ENCODE measurements at regions of chr6 and their contacts with region 1.

Region 1: GRCh38 chr6:29847871-29848630 is 20.4 kb downstream of the HLA-G start:
- DNase-seq: peak; percentile 87
- H3K4me3 ChIP-seq: no peak overlapping the region
- H3K27ac ChIP-seq: no peak overlapping the region
- H3K4me1 ChIP-seq: peaks cover 0 to 8% (median 0%) of the 10 kb centered on the region in 4 donors
- H3K27me3 ChIP-seq: peaks cover 63% of the 10 kb centered on the region
- CTCF ChIP-seq: peak; percentile 88 to 95 (median 94)
- EP300 ChIP-seq: no peak
- POLR2A ChIP-seq: no peak

Region 2: GRCh38 chr6:29656157-29656556 is 191.9 kb before region 1 on chr6:
- in situ Hi-C with region 1: no loop called
- intact Hi-C with region 1: no loop called
- DNase-seq: no peak
- H3K4me3 ChIP-seq: no peak overlapping the region
- H3K27ac ChIP-seq: no peak overlapping the region
- H3K4me1 ChIP-seq: peaks cover 0 to 5% (median 0%) of the 10 kb centered on the region in 4 donors
- H3K27me3 ChIP-seq: peaks cover 11% of the 10 kb centered on the region
- CTCF ChIP-seq: no peak
- EP300 ChIP-seq: no peak
- POLR2A ChIP-seq: no peak

Region 3: GRCh38 chr6:29723262-29723665 is 124.8 kb before region 1 on chr6 and contains the start of gene HLA-F:
- in situ Hi-C with region 1: loop called in 3 of 4 experiments (anchors 25 kb)
- intact Hi-C with region 1: no loop called
- DNase-seq: peak; percentile 93
- H3K4me3 ChIP-seq: peak within 1 kb of the TSS; percentile 83 to 98 (median 91)
- H3K27ac ChIP-seq: peak within 1 kb of the TSS; percentile 87 to 92 (median 90)
- H3K4me1 ChIP-seq: peaks cover 4 to 23% (median 11%) of the 10 kb centered on the region in 4 donors
- H3K27me3 ChIP-seq: no peaks in the 10 kb centered on the region
- CTCF ChIP-seq: peak in 1 of 5 experiments; percentile 3
- EP300 ChIP-seq: no peak
- POLR2A ChIP-seq: peak; percentile 87
- total RNA-seq, gene HLA-F: 90.4 to 500 (median 306) TPM

Region 4: GRCh38 chr6:29752451-29753308 is 95.4 kb before region 1 on chr6:
- in situ Hi-C with region 1: loop called in 2 of 4 experiments (anchors 25 kb)
- intact Hi-C with region 1: no loop called
- DNase-seq: peak; percentile 91
- H3K4me3 ChIP-seq: peak overlapping the region; percentile 64 to 81 (median 66)
- H3K27ac ChIP-seq: peak overlapping the region; percentile 88 to 95 (median 93)
- H3K4me1 ChIP-seq: peaks cover 4 to 29% (median 25%) of the 10 kb centered on the region in 4 donors
- H3K27me3 ChIP-seq: peaks cover 5% of the 10 kb centered on the region
- CTCF ChIP-seq: peak; percentile 87 to 97 (median 91)
- EP300 ChIP-seq: no peak
- POLR2A ChIP-seq: peak; percentile 28

Region 5: DNA sequence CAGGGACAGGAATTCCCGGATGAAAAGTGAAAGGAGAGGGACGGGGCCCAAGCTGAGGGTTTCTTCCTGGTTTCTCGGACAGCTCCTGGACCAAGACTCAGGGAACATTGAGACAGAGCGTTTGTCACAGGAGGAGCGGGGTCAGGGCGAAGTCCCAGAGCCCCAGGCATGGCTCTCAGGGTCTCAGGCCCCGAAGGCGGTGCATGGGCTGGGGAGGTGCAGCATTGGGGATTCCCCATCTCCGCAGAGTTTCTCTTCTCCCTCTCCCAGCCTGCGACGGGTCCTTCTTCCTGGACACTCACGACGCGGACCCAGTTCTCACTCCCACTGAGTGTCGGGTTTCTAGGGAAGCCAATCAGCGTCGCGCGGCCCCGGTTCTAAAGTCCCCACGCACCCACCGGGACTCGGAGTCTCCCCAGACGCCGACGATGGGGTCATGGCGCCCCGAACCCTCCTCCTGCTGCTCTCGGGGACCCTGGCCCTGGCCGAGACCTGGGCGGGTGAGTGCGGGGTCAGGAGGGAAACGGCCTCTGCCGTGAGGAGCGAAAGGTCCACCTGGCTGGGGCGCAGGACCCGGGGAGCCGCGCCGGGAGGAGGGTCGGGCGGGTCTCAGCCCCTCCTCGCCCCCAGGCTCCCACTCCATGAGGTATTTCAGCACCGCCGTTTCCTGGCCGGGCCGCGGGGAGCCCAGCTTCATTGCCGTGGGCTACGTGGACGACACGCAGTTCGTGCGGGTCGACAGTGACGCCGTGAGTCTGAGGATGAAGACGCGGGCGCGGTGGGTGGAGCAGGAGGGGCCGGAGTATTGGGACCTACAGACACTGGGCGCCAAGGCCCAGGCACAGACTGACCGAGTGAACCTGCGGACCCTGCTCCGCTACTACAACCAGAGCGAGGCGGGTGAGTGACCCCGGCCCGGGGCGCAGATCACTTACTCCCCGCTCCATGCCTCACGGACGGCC is 158.4 kb after region 1 on chr6:
- in situ Hi-C with region 1: loop called (anchors 5 to 25 kb)
- intact Hi-C with region 1: loop called (anchors 5 kb)
- DNase-seq: peak; percentile 20
- H3K4me3 ChIP-seq: peak overlapping the region; percentile 30 to 63 (median 48)
- H3K27ac ChIP-seq: peak overlapping the region in 2 of 4 donors; percentile 8 to 31
- H3K4me1 ChIP-seq: peaks cover 8 to 22% (median 17%) of the 10 kb centered on the region in 4 donors
- H3K27me3 ChIP-seq: peaks cover 25% of the 10 kb centered on the region
- CTCF ChIP-seq: no peak
- EP300 ChIP-seq: no peak
- POLR2A ChIP-seq: no peak

Region 6: DNA sequence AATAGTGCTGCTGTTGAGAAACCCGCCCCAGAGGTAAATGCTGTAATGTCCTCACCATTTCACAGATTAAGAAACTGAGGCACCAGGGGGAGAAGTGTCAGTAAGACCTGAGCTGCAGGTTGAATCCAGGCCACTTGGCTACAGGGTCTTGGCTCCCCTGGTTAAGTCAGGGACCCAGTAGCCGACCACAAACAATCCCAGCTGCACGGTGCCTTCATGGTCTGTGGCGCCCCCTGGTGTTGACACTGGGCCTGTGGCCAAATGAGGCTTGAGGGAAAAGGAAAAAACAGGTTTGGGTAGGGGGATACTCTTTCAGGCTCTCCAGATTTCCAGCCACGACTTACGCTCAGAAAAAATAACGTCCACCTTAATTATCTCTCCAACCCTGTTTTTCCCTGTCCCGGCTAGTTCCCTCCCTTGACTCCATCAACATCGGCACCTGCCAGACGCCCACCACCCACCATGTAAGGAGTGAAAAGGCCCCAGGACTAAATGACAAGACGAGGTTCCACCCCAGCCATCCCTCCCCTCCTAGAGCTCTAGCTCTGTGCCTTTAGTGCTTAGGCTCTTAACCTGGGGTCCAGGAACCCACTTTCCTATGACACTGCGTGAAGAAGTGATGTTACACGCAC is 165.4 kb after region 1 on chr6:
- in situ Hi-C with region 1: loop called (anchors 5 to 25 kb)
- intact Hi-C with region 1: loop called (anchors 5 kb)
- DNase-seq: no peak
- H3K4me3 ChIP-seq: no peak overlapping the region
- H3K27ac ChIP-seq: no peak overlapping the region
- H3K4me1 ChIP-seq: no peaks in the 10 kb centered on the region
- H3K27me3 ChIP-seq: peaks cover under 1% of the 10 kb centered on the region
- CTCF ChIP-seq: peak; percentile 60 to 90 (median 71)
- EP300 ChIP-seq: no peak
- POLR2A ChIP-seq: no peak

Region 7: DNA sequence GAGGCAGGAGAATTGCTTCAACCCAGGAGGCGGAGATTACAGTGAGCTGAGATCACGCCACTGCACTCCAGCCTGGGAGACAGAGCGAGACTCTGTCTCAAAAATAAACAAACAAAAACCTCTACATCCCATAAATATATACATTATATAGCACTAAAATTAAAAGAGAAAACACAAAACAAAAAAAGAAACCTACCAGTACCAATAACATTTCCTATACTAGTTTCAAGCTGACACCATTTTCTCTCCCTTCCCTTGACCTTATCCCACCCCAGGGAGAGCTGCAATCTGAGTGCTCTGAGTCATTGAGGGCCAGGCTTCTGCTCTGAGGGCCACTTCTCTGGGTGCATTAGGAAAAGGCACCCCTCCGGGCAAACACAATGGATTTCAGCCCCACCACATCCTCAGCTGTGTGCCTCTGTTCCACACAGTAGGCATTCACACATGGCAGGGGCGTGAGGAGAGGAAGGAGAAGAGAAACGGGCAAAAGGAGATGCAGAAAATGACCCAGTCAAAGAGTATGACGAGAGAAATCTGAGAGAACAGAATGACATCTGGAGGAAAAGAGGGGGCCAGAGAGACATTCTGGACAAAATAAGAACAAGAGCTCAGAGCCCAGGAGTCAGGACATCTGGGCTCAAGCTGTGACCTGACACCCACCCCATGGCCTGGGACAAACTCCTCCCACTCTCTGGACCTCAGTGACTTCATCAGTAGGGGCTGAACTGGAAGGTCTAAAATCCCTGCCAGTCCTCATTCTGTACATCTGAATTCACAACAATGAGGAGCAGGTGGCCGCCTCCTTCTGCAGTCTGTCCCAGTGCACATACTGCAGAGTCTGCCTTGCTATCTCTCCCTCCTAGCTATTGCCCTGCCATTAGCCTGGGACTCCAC is 347.0 kb after region 1 on chr6:
- in situ Hi-C with region 1: loop called in 1 of 4 experiments (anchors 25 kb)
- intact Hi-C with region 1: no loop called
- DNase-seq: no peak
- H3K4me3 ChIP-seq: no peak overlapping the region
- H3K27ac ChIP-seq: no peak overlapping the region
- H3K4me1 ChIP-seq: no peaks in the 10 kb centered on the region
- H3K27me3 ChIP-seq: no peaks in the 10 kb centered on the region
- CTCF ChIP-seq: no peak
- EP300 ChIP-seq: no peak
- POLR2A ChIP-seq: no peak

Region 8: DNA sequence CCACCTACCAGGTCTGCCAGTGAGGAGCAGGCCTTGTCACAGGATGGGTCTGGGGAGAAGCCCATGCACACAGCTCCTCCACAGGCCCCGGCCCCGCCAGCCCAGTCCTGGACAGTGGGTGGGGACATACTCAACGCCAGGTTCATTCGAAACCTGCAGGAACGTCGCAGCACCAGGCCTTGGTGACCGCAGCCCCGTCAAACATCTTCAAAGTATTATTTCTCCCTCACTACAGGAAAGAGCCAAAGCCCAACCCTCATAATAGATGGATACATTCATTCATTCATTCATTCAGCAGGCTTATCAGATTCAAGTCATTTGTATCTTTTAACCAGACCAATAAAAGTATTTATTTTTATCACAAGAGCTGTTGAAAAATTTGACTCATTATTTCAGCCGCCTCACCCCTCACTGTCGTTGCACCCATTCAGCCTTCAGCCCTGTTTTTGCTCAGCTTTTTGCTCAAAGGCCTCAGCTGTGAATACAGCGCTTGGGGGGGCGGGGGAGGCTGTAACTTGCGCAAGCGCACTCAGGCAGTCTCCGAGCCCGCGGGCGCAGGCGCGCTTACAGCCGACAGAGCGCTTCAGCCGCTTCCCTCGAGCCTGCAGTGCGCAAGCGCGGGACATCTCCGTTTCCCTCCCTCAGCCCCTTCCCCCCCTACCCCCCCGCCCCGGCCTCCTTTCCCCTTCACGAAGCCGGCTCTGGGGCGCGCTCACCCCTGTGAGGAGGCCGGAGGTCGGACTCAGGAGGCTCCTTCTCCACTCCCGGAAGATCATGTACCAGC is 798.6 kb after region 1 on chr6 and contains the start of gene C6orf136:
- in situ Hi-C with region 1: no loop called
- intact Hi-C with region 1: no loop called
- DNase-seq: peak; percentile 96
- H3K4me3 ChIP-seq: peak within 1 kb of the TSS; percentile 56 to 93 (median 82)
- H3K27ac ChIP-seq: peak within 1 kb of the TSS; percentile 93 to 98 (median 97)
- H3K4me1 ChIP-seq: peaks cover 13 to 38% (median 25%) of the 10 kb centered on the region in 4 donors
- H3K27me3 ChIP-seq: no peaks in the 10 kb centered on the region
- CTCF ChIP-seq: no peak
- EP300 ChIP-seq: no peak
- POLR2A ChIP-seq: no peak
- total RNA-seq, gene C6orf136: 49.1 to 301 (median 63.5) TPM

Measured in transverse colon (tissue), 4 donors.